T-cell (primary cell): ENCODE measurements at regions of chr7 and their contacts with region 1.

Region 1: DNA sequence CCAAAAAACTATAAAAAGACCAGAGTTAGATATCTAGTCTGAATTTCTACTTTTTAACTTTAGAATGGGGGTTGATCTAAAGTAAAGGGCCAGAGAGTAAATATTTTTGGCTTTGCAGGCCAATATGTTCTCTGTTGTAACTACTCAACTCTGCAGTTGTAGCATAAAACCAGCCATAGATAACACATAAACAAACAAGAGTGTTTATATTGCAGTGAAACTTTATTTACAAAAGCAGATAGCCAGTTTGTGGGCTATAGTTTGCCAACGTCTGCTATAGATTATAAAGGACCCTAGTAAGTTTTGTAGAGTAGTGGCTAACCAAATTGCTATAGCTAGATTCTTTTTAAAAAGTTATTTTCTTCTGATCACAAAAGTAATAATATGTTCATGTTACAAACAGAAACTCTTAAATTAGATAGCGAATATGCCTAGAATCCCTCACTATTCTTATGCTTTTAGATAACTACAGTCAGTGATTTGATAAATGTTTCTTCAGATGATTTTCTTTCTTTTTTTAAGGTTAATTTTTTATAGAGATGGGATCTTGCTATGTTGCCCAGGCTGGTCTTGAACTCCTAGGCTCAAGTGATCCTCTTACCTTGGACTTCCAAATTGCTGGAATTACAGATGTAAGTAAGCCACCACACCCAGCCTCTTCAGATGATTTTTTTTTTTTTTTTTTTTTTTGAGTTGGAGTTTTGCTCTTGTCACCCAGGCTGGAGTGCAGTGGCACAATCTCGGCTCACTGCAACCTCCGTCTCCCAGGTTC is 23.6 kb upstream of the HBP1 start:
- DNase-seq: no peak
- ATAC-seq: no peak
- H3K4me3 ChIP-seq: no peak overlapping the region
- H3K4me3 Mint-ChIP-seq: no peak overlapping the region
- H3K27ac ChIP-seq: no peak overlapping the region
- H3K27ac Mint-ChIP-seq: no peak overlapping the region
- H3K4me1 ChIP-seq: no peaks in the 10 kb centered on the region
- H3K4me1 Mint-ChIP-seq: peaks cover 0 to 5% (median 3%) of the 10 kb centered on the region in 3 donors
- H3K27me3 ChIP-seq: no peaks in the 10 kb centered on the region
- H3K27me3 Mint-ChIP-seq: no peaks in the 10 kb centered on the region

Region 2: DNA sequence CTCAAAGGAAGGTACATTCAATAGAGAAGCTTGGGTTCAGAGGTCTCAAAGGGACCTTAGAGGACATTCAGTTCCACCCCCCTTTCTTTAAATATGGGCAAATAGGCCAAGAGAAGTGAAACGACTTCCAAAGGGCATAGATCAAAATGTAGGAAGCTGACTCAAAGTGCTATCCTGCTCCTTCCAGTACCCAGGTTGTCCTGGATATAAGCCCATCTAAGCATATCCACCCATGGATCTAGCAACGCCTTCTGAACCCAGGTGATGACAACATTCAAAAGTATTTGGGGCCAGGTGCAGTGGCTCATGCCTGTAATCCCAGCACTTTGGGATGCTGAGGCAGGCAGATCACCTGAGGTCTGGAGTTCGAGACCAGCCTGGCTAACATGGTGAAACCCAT is 1274.1 kb before region 1 on chr7:
- CTCF ChIA-PET with region 1: interaction called in 1 of 2 experiments, 11 read pairs
- POLR2A ChIA-PET with region 1: no interaction called
- DNase-seq: no peak
- ATAC-seq: no peak
- H3K4me3 ChIP-seq: no peak overlapping the region
- H3K4me3 Mint-ChIP-seq: no peak overlapping the region
- H3K27ac ChIP-seq: no peak overlapping the region
- H3K27ac Mint-ChIP-seq: no peak overlapping the region
- H3K4me1 ChIP-seq: peaks cover 9 to 15% of the 10 kb centered on the region in 2 experiments
- H3K4me1 Mint-ChIP-seq: peaks cover 31 to 45% (median 36%) of the 10 kb centered on the region in 3 donors
- H3K27me3 ChIP-seq: no peaks in the 10 kb centered on the region
- H3K27me3 Mint-ChIP-seq: no peaks in the 10 kb centered on the region

Region 3: DNA sequence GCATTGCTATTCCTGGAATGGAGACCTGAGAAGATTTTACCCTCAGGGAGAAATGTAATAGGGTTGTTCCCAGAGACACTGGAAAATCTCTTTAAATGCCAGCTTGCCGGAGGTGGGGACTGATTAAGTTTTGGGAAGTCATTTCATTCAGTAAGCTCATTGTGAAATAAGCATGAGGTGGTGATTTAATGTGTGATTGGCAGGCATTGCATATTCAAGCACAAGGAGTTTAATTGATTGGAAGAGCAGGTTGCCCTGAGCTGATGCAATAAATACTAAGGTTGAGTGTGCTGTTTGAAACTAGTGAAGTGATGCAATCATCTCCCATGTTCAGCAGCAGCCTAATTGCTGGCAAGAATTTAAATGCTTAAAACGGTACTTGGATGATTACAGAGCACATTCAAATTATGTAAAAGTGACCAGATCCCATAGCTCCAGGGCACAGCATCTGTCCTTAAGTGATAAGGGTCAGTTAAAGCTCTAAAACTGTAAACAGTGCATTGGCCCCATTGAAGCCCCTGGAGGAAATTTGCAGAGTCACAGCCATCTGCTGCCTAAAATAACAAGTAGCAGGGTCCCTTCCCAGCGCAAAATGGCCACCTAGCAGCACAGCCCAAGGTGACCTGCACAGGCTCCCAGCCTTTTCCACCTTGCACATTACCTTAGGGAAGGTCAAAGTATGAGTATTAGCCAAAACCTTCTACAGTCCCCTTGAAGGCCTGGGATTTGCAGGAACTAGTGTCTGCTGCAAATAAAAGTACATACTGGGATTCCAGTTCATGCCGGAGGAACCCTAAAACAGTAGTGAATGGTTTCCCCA is 576.4 kb before region 1 on chr7:
- CTCF ChIA-PET with region 1: no interaction called
- POLR2A ChIA-PET with region 1: no interaction called
- DNase-seq: no peak
- ATAC-seq: no peak
- H3K4me3 ChIP-seq: no peak overlapping the region
- H3K4me3 Mint-ChIP-seq: no peak overlapping the region
- H3K27ac ChIP-seq: no peak overlapping the region
- H3K27ac Mint-ChIP-seq: no peak overlapping the region
- H3K4me1 ChIP-seq: no peaks in the 10 kb centered on the region
- H3K4me1 Mint-ChIP-seq: no peaks in the 10 kb centered on the region
- H3K27me3 ChIP-seq: peaks cover 0 to 4% of the 10 kb centered on the region in 2 experiments
- H3K27me3 Mint-ChIP-seq: peaks cover 11 to 14% of the 10 kb centered on the region in 2 donors